Activated CD4-positive, alpha-beta T cell treated with anti-CD3 and anti-CD28 coated beads for 36 hours (primary cell): ENCODE measurements at regions of chr19 and their contacts with region 1.

Region 1: DNA sequence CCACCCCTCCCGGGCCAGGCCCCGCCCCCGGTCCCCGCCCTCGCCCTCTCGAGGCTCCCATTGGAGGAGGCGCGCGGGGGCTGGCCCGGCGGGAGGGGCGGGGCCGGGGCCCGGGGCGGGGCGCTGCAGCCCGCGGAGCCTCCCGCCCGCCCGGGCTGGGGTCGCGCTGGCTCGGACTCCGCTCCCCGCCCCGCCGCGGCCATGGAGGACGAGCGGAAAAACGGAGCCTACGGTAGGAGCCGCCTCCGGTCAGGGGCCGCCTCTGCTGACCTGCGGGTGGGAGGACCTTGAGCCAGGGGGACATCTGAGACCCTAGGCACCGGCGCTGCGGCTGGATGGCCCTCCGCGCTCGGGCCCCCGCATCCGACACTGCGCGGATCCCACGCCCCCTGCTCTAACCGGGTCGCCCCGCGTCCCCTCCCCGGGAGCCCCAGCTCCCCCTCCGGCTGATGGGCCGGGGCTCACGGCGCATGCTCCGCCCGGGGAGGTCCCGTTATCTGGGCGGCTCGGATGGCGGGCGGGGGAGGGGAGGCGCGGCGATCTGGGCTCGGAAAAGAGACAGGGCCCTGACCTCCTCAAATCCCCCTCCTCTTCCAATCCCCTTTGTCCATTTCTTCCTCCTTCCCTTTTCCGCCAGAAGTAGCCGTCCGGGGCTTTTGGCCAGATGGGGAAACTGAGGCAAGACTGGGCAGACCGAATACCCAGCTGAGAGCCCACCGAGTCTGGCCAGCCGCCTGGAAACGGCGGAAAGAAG is 15.4 kb upstream of the AP1M2 start:
- DNase-seq: peak; percentile 95
- ATAC-seq: peak; percentile 84
- H3K4me3 Mint-ChIP-seq: peak overlapping the region; percentile 95
- H3K27ac Mint-ChIP-seq: peak overlapping the region; percentile 99
- H3K4me1 Mint-ChIP-seq: peaks cover 24% of the 10 kb centered on the region
- H3K27me3 Mint-ChIP-seq: no peaks in the 10 kb centered on the region

Region 2: DNA sequence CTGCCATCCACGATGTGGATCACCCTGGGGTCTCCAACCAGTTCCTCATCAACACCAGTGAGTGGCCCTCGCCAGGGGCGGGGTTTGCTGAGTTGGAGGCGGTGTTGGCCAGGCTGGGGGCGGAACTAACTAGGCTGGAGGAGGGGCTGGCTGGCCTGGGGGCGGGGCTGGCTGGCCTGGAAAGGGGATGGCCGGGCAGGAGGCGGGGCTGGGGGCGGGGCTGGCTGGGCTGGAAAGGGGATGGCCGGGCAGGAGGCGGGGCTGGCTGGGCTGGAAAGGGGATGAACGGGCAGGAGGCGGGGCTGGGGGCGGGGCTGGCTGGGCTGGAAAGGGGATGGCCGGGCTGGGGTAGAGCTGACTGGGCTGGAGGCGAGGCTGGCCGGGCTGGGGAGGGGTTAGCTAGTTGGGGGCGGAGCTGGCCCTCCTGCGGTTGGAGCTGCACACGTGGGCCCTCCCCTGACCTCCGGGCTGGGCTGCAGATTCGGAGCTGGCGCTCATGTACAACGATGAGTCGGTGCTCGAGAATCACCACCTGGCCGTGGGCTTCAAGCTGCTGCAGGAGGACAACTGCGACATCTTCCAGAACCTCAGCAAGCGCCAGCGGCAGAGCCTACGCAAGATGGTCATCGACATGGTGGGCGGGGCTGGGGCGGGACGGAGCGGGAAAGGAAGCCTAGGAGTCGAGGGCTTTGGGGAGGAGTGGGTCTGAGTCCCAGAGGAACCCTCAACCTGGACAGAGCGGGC is 141.3 kb before region 1 on chr19:
- CTCF ChIA-PET with region 1: no interaction called
- POLR2A ChIA-PET with region 1: no interaction called
- intact Hi-C with region 1: loop called in 1 of 2 experiments (anchors 1 kb)
- DNase-seq: peak; percentile 98
- ATAC-seq: peak; percentile 98
- H3K4me3 Mint-ChIP-seq: peak overlapping the region; percentile 43
- H3K27ac Mint-ChIP-seq: no peak overlapping the region
- H3K4me1 Mint-ChIP-seq: peaks cover 9% of the 10 kb centered on the region
- H3K27me3 Mint-ChIP-seq: peaks cover 3% of the 10 kb centered on the region

Region 3: DNA sequence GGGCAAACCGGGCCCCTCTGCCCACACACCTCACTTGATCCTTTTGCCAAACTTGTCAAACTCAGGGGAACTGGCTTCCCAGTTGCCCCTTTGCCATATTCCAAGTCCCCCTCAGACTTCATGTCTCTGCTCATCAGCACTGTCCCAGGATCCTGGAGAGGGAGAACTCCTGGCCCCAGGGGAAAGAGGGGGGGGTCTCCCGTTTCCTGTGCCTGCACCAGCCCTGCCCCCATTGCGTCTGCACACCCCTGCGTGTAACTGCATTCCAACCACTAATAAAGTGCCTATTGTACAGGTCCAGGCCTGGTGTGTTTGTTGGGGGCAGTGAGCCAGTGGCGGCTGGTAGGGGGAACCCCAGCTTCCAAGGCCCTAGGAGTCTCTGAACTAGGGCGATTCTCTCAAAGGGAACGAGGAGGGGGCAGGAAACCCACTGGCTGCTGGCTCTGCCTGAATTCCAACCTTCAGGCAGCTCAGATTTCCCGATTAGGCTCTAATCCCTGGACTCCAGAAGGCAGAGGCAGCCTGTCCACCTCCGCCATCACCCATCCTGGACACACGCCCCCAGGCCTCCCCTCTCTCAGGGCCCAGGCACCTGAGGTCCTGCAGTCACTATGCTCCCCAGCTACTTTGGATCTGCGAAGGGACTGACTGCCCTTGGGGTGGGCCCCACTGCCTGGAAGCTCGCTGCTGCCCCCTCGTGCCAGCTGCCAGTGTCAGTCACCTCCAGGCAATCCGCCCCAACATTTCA is 41.9 kb after region 1 on chr19:
- CTCF ChIA-PET with region 1: interaction called, 17 read pairs
- POLR2A ChIA-PET with region 1: no interaction called
- intact Hi-C with region 1: loop called in 1 of 2 experiments (anchors 5 kb)
- DNase-seq: peak; percentile 91
- ATAC-seq: peak; percentile 87
- H3K4me3 Mint-ChIP-seq: no peak overlapping the region
- H3K27ac Mint-ChIP-seq: no peak overlapping the region
- H3K4me1 Mint-ChIP-seq: peaks cover 30% of the 10 kb centered on the region
- H3K27me3 Mint-ChIP-seq: no peaks in the 10 kb centered on the region

Region 4: GRCh38 chr19:10677751-10678150 is 75.2 kb after region 1 on chr19:
- CTCF ChIA-PET with region 1: no interaction called
- POLR2A ChIA-PET with region 1: no interaction called
- intact Hi-C with region 1: no loop called
- DNase-seq: no peak
- ATAC-seq: no peak
- H3K4me3 Mint-ChIP-seq: no peak overlapping the region
- H3K27ac Mint-ChIP-seq: no peak overlapping the region
- H3K4me1 Mint-ChIP-seq: no peaks in the 10 kb centered on the region
- H3K27me3 Mint-ChIP-seq: no peaks in the 10 kb centered on the region

Region 5: GRCh38 chr19:10701955-10702525 is 99.5 kb after region 1 on chr19:
- CTCF ChIA-PET with region 1: interaction called, 7 read pairs
- POLR2A ChIA-PET with region 1: no interaction called
- intact Hi-C with region 1: loop called in 1 of 2 experiments (anchors 1 kb)
- DNase-seq: peak; percentile 60
- ATAC-seq: peak; percentile 43
- H3K4me3 Mint-ChIP-seq: peak overlapping the region; percentile 91
- H3K27ac Mint-ChIP-seq: peak overlapping the region; percentile 74
- H3K4me1 Mint-ChIP-seq: peaks cover 10% of the 10 kb centered on the region
- H3K27me3 Mint-ChIP-seq: no peaks in the 10 kb centered on the region

Region 6: GRCh38 chr19:10946964-10947657 is 344.6 kb after region 1 on chr19:
- CTCF ChIA-PET with region 1: no interaction called
- POLR2A ChIA-PET with region 1: no interaction called
- intact Hi-C with region 1: no loop called
- DNase-seq: no peak
- ATAC-seq: no peak
- H3K4me3 Mint-ChIP-seq: no peak overlapping the region
- H3K27ac Mint-ChIP-seq: no peak overlapping the region
- H3K4me1 Mint-ChIP-seq: peaks cover 6% of the 10 kb centered on the region
- H3K27me3 Mint-ChIP-seq: no peaks in the 10 kb centered on the region